ENCODE measurements at regions of chr2 and their contacts with region 1.

Region 1: DNA sequence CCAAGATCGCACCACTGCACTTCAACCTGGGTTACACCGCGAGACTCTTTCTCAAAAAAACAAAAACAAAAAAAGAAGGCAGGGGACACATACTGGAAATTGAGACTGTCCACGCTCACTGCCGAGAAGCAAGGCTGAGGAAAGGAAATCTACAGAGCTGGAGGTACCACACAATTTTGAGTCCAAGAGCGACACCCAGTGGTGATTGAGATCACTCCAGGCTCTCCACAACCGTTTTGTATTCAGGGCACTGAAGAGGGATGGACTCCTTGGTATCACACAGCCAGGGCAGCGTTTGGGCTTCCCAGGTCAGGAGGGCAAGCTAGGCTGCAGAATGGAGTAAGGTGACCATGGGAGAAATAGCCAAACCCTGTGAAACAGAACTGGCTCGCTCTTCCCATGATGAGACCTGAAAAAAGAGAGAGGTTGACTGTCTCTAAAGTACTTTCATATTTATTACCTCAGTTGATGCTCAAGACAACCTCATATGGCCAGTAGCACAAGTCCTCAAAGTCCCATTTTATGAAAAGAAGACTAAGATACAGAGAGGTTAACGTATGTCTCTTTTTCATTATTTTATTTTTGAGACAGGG is 74.5 kb upstream of the YPEL5 start:
- DNase-seq: peak; percentile 82
- H3K4me3 ChIP-seq: no peak overlapping the region
- H3K27ac ChIP-seq: no peak overlapping the region
- H3K4me1 ChIP-seq: peaks cover 0 to 2% of the 10 kb centered on the region in 2 experiments; a peak in 1 of 4 replicates
- H3K27me3 ChIP-seq: peaks cover 6% of the 10 kb centered on the region; the same call in 1 of the 2 replicates
- CTCF ChIP-seq: peak; percentile 87
- EP300 ChIP-seq: no peak
- RAD21 ChIP-seq: peak; percentile 99

Region 2: DNA sequence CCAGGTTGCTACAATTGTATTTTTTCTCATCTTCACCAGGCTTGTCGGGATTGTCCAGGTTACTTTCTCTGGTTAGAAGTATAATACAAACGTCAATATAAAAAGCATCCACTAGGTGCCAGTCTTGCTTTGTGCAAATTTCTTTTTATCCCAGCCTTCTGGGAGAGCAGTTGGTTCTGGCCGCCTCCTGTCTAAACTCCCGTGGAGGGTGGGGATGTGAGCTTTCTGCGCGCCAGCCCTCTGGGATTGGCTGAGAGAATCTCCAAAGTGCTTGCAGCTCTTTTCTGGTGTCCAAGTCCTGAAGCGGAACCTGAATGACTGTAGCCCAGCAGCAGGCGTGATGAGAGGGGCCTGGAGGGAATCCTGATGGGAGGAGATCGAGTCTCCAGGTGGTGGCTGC is 1113.7 kb before region 1 on chr2:
- CTCF ChIA-PET with region 1: interaction called, 10 read pairs
- POLR2A ChIA-PET with region 1: interaction called, 7 read pairs
- DNase-seq: peak; percentile 87
- H3K4me3 ChIP-seq: no peak overlapping the region; a peak in 1 of 4 replicates
- H3K27ac ChIP-seq: peak overlapping the region in 1 of 2 experiments; percentile 26; a peak in 1 of 4 replicates
- H3K4me1 ChIP-seq: peaks cover 0 to 10% of the 10 kb centered on the region in 2 experiments; a peak in 1 of 4 replicates
- H3K27me3 ChIP-seq: no peaks in the 10 kb centered on the region
- CTCF ChIP-seq: peak; percentile 79
- EP300 ChIP-seq: 0 out of 4 replicates have a peak, but pooled peaks of 1 of the 2 experiments have one; percentile 18
- RAD21 ChIP-seq: peak; percentile 99

Region 3: GRCh38 chr2:30026087-30027055 is 46.0 kb before region 1 on chr2:
- CTCF ChIA-PET with region 1: interaction called, 38 read pairs
- POLR2A ChIA-PET with region 1: no interaction called
- DNase-seq: peak; percentile 89
- H3K4me3 ChIP-seq: peak overlapping the region; percentile 21 to 30; a peak in 3 of 4 replicates
- H3K27ac ChIP-seq: peak overlapping the region in 1 of 2 experiments; percentile 92; a peak in 2 of 4 replicates
- H3K4me1 ChIP-seq: peaks cover 5 to 57% of the 10 kb centered on the region in 2 experiments; a peak in 3 of 4 replicates
- H3K27me3 ChIP-seq: 0 out of 2 replicates have a peak, but pooled peaks cover 4% of the 10 kb centered on the region
- CTCF ChIP-seq: peak; percentile 83
- EP300 ChIP-seq: peak in 1 of 2 experiments; percentile 89; a peak in 2 of 4 replicates
- RAD21 ChIP-seq: peak; percentile 95

Region 4: DNA sequence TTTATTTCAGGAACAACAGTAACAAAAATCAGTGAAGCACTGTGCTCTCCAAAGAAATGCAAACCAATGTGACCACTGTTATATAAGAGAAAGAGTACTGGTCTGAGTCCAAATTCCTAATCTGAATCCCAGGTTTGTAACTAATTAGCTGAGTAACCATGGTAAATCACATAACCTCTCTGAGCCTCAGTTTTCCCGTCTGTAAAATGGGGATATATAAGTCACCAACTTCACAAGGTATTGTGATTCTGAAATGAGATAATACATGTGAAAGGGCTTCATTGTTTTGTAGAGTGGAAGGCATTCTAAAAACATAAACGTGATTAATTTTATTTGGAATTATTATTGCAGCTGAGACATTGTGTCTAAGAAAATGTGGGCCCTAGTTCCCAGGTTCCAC is 16.8 kb before region 1 on chr2:
- CTCF ChIA-PET with region 1: interaction called, 11 read pairs
- POLR2A ChIA-PET with region 1: no interaction called
- DNase-seq: no peak
- H3K4me3 ChIP-seq: no peak overlapping the region
- H3K27ac ChIP-seq: no peak overlapping the region
- H3K4me1 ChIP-seq: no peaks in the 10 kb centered on the region
- H3K27me3 ChIP-seq: no peaks in the 10 kb centered on the region
- CTCF ChIP-seq: no peak
- EP300 ChIP-seq: no peak
- RAD21 ChIP-seq: no peak

Region 5: GRCh38 chr2:30115141-30115980 is 43.0 kb after region 1 on chr2:
- CTCF ChIA-PET with region 1: interaction called, 14 read pairs
- POLR2A ChIA-PET with region 1: no interaction called
- DNase-seq: peak; percentile 86
- H3K4me3 ChIP-seq: peak overlapping the region in 1 of 2 experiments; percentile 7; a peak in 1 of 4 replicates
- H3K27ac ChIP-seq: peak overlapping the region in 1 of 2 experiments; percentile 85; a peak in 3 of 4 replicates
- H3K4me1 ChIP-seq: peaks cover 4 to 26% of the 10 kb centered on the region in 2 experiments; a peak in 3 of 4 replicates
- H3K27me3 ChIP-seq: no peaks in the 10 kb centered on the region
- CTCF ChIP-seq: peak; percentile 100
- EP300 ChIP-seq: peak in 1 of 2 experiments; percentile 94; a peak in 2 of 4 replicates
- RAD21 ChIP-seq: peak; percentile 99